RWPE1 (cell line): ENCODE measurements at regions of chr12 and their contacts with region 1.

Region 1: DNA sequence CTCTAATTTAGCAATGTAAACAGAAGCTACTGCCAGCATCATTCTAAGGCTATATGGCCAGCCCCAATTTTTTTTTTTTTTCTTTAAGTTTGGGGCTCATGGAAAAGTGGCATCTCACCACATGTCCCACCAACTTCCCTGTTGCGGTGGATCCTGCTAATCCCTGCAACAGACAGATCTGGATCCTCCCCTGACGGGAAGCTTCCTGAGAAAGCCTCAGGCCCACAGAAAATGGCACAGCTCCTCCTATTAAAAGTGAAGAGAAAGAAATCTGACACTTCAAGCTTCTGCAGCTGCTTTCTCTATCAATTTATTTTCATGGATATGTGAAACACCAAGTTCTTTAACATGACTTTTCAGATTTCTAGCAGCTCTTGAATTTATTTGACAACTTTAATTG is 433.8 kb upstream of the DCN start:
- DNase-seq: no peak
- H3K27ac ChIP-seq: no peak overlapping the region
- CTCF ChIP-seq: no peak

Region 2: DNA sequence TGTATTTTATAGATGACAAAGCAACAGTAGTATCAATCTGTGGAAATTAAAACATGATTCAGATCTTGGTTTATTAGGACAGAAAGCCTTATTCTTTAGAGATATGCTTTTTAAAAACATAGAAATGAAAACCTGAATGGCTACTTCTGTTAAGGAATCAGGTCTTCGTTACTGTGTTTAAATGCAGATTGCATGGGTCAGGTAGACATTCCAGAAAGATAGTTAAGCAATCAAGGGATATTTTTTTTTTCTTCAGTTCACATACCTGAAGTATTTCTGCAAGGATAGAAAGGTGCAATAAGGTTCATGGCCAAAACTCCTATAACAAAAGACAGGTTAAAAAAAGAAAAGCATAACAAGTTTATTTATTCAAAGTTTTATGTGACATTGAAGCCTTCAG is 1239.2 kb before region 1 on chr12:
- CTCF ChIA-PET with region 1: interaction called, 10 read pairs
- POLR2A ChIA-PET with region 1: no interaction called
- DNase-seq: no peak
- H3K27ac ChIP-seq: no peak overlapping the region
- CTCF ChIP-seq: no peak